Calu3 (cell line): ENCODE measurements at regions of chr2 and their contacts with region 1.

Region 1: GRCh38 chr2:170498619-170499018 is 216.5 kb upstream of the SP5 start:
- DNase-seq: no peak
- H3K4me3 Mint-ChIP-seq: no peak overlapping the region
- H3K27ac Mint-ChIP-seq: no peak overlapping the region
- H3K4me1 Mint-ChIP-seq: no peaks in the 10 kb centered on the region
- H3K27me3 Mint-ChIP-seq: no peaks in the 10 kb centered on the region
- CTCF ChIP-seq: no peak

Region 2: GRCh38 chr2:170022692-170023091 is 475.9 kb before region 1 on chr2:
- CTCF ChIA-PET with region 1: no interaction called
- intact Hi-C with region 1: no loop called
- DNase-seq: no peak
- H3K4me3 Mint-ChIP-seq: no peak overlapping the region
- H3K27ac Mint-ChIP-seq: no peak overlapping the region
- H3K4me1 Mint-ChIP-seq: no peaks in the 10 kb centered on the region
- H3K27me3 Mint-ChIP-seq: no peaks in the 10 kb centered on the region
- CTCF ChIP-seq: no peak

Region 3: GRCh38 chr2:170680172-170680941 is 181.7 kb after region 1 on chr2:
- CTCF ChIA-PET with region 1: interaction called, 12 read pairs
- intact Hi-C with region 1: no loop called
- DNase-seq: no peak
- H3K4me3 Mint-ChIP-seq: no peak overlapping the region
- H3K27ac Mint-ChIP-seq: no peak overlapping the region
- H3K4me1 Mint-ChIP-seq: no peaks in the 10 kb centered on the region
- H3K27me3 Mint-ChIP-seq: no peaks in the 10 kb centered on the region
- CTCF ChIP-seq: no peak